Aorta (tissue), 5 donors: ENCODE measurements at regions of chr11 and their contacts with region 1.

Region 1: GRCh38 chr11:133927690-133928627 is 28.8 kb downstream of the IGSF9B start:
- DNase-seq: peak in 1 of 2 donors; percentile 72
- ATAC-seq: peak; percentile 73
- H3K4me3 ChIP-seq: no peak overlapping the region
- H3K27ac ChIP-seq: no peak overlapping the region
- H3K4me1 ChIP-seq: no peaks in the 10 kb centered on the region
- H3K27me3 ChIP-seq: no peaks in the 10 kb centered on the region

Region 2: DNA sequence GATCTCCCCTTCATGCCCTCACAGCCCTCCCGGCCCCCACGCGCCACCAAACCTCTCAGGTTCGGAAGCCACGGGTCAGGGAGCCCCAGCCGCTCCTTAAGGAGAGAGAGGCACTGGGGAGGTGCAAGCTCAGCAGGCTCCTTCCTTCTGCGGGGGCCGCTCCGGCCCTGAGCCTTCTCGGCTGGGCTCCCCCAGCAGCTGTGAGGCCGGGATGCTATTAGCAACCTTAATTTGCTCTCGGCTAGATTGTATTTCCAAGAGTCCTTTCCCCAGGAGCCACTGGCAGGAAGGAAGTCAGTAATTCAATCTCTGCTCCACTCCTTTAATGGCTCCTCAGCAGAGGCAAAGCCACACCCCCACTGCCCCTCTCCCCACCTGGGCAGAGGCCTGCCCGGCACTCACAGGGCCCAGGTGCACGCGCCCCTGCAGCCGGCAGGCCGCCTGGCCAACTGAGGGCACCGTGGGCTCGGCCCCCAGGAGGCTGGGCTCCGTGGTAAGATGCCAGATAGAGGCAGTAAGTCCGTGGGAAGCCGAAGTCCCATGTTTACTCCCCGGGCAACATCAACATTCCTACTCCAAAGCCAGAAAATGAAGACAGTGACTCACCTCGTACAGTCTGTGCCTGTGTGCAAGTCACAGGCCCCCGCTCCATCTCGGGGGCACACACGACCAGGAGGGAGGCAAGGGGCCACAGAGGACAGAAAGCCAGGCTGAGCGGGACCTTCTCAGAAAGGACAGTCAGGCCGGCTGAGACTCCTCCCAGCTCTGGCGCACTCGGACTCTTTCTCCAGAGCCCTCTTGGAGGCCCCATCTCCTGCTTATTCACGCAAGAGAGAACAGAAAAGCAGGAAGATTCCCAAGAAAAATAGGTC is 23.6 kb after region 1 on chr11:
- intact Hi-C with region 1: loop called in 1 of 2 experiments (anchors 2 kb)
- DNase-seq: no peak
- ATAC-seq: peak; percentile 23
- H3K4me3 ChIP-seq: peak overlapping the region in 1 of 2 donors; percentile 24
- H3K27ac ChIP-seq: peak overlapping the region; percentile 15 to 85
- H3K4me1 ChIP-seq: peaks cover 3 to 4% of the 10 kb centered on the region in 2 donors
- H3K27me3 ChIP-seq: no peaks in the 10 kb centered on the region

Region 3: DNA sequence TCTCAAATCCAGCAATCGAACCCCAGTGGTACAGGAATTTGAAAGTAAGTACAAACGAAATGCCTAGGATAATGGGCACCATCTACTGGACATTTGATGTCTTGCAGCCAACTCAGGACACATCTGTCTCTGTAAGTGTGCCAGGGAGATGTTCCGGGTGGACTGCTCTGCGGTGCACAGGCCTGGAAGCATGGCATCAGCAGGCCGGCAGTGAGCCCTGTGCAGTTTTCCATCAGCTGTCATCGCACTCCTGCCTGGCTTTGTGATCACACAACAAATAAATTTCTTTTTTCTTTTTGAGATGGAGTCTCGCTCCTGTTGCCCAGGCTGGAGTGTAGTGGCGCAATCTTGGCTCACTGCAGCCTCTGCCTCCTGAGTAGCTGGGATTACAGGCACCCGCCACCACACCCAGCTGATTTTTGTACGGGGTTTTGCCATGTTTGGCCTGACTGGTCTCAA is 211.9 kb after region 1 on chr11:
- intact Hi-C with region 1: loop called (anchors 5 to 10 kb)
- DNase-seq: no peak
- ATAC-seq: peak; percentile 93
- H3K4me3 ChIP-seq: no peak overlapping the region
- H3K27ac ChIP-seq: peak overlapping the region; percentile 55 to 84
- H3K4me1 ChIP-seq: no peaks in the 10 kb centered on the region
- H3K27me3 ChIP-seq: no peaks in the 10 kb centered on the region

Region 4: DNA sequence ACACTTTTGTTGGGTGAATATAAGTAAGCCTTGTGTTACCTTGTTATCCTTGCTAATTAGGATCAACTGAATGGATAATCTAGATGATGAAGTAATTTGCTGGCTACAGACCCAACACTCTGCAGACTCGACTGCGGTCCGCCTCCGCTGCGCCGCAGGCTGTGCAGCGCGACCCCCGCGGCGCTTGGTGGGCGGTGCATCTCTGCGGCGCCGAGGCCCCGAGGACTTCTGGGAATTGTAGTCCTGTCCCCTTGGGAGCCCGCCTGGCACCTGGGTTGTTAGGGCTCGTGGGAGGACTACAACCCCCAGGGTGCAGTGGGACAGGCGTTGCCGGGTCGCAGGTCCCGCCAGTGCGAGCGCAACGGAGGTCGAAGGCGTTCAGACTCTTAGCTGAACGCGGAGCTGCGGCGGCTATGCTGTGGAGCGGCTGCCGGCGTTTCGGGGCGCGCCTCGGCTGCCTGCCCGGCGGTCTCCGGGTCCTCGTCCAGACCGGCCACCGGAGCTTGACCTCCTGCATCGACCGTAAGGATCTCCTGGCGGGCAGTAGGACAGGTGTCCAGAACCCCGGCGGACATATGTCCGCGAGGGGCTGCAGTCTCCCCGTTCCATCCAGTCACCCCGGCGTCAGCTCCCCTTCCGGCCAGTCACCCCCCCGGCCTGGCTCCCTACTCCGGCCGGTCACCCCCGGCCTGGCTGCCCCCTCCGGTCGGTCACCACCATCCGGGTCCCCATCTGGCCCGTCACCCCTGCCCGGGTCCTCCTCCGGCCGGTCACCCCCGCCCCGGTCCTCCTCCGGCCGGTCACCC is 325.4 kb after region 1 on chr11 and contains the starts of genes ACAD8 and THYN1:
- intact Hi-C with region 1: loop called in 1 of 2 experiments (anchors 10 kb)
- DNase-seq: peak; percentile 98
- ATAC-seq: peak; percentile 100
- H3K4me3 ChIP-seq: peak within 1 kb of the TSS; percentile 62 to 99
- H3K27ac ChIP-seq: peak within 1 kb of the TSS in 1 of 2 donors; percentile 48
- H3K4me1 ChIP-seq: peaks cover 0 to 5% of the 10 kb centered on the region in 2 donors
- H3K27me3 ChIP-seq: no peaks in the 10 kb centered on the region
- total RNA-seq, gene ACAD8: 16.7 to 25.3 TPM
- total RNA-seq, gene THYN1: 28.3 to 33.9 TPM